ENCODE measurements at regions of chr6 and their contacts with region 1.

Region 1: DNA sequence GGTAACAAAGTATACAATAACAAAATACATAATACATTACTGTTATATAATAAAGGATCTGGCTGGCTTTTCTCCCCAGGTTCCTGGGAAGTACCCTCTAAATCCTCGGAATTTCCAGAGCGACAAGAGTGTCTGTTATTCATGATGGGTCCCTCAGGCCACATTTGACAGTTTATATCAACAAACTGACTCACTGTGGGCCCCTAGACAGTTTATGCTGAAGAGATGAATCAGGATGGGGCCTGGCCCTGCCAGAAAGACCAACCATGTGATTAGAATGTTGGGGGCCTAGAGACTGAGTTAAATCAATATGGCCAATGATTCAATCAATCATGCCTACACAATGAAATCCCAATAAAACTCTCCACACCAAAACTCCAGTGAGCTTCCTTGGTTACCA is 13.5 kb downstream of the USP45 start:
- DNase-seq: no peak
- ATAC-seq: no peak
- H3K4me3 ChIP-seq: no peak overlapping the region
- H3K27ac ChIP-seq: no peak overlapping the region
- H3K4me1 ChIP-seq: peaks cover 0 to 10% (median 7%) of the 10 kb centered on the region in 9 donors
- H3K27me3 ChIP-seq: no peaks in the 10 kb centered on the region
- CTCF ChIP-seq: no peak

Region 2: GRCh38 chr6:99434702-99435530 is 66.8 kb before region 1 on chr6:
- intact Hi-C with region 1: loop called in 1 of 10 experiments (anchors 10 kb)
- DNase-seq: no peak
- ATAC-seq: peak in 2 of 8 donors; percentile 58 to 64
- H3K4me3 ChIP-seq: no peak overlapping the region
- H3K27ac ChIP-seq: no peak overlapping the region
- H3K4me1 ChIP-seq: peaks cover 0 to 11% (median 0%) of the 10 kb centered on the region in 9 donors
- H3K27me3 ChIP-seq: no peaks in the 10 kb centered on the region
- CTCF ChIP-seq: peak; percentile 61 to 79 (median 72)

Region 3: DNA sequence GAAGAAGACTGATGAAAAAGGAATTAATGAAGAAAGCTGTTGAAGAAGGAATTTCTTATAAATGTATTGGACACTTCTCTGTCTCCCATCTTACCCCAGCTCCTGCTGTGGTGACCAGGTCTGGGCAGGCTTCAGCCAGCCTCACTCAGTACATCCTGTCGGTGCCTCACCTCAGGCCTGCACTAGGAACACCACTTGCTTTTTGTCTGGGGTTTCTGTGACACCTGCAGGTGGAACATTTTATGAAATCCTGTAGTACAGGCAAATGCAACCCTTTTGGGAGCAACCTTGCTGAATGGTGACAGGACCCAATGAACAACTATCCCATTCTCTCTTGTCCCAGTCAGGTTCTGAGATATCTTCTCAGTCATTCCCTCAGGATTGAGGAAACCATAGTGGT is 234.5 kb after region 1 on chr6:
- intact Hi-C with region 1: no loop called
- DNase-seq: no peak
- ATAC-seq: no peak
- H3K4me3 ChIP-seq: no peak overlapping the region
- H3K27ac ChIP-seq: no peak overlapping the region
- H3K4me1 ChIP-seq: no peaks in the 10 kb centered on the region
- H3K27me3 ChIP-seq: peaks cover 0 to 24% (median 15%) of the 10 kb centered on the region in 7 donors
- CTCF ChIP-seq: no peak

Measured in heart right ventricle (tissue), 16 donors.